Activated CD8-positive, alpha-beta T cell treated with anti-CD3 and anti-CD28 coated beads for 36 hours (primary cell): ENCODE measurements at regions of chr5 and their contacts with region 1.

Region 1: GRCh38 chr5:10635257-10635866 is 71.5 kb downstream of the ANKRD33B start:
- DNase-seq: peak; percentile 94
- ATAC-seq: peak; percentile 82
- H3K4me3 Mint-ChIP-seq: peak overlapping the region; percentile 73
- H3K27ac Mint-ChIP-seq: peak overlapping the region; percentile 100
- H3K4me1 Mint-ChIP-seq: peaks cover 59% of the 10 kb centered on the region
- H3K27me3 Mint-ChIP-seq: no peaks in the 10 kb centered on the region
- CTCF ChIP-seq: no peak

Region 2: DNA sequence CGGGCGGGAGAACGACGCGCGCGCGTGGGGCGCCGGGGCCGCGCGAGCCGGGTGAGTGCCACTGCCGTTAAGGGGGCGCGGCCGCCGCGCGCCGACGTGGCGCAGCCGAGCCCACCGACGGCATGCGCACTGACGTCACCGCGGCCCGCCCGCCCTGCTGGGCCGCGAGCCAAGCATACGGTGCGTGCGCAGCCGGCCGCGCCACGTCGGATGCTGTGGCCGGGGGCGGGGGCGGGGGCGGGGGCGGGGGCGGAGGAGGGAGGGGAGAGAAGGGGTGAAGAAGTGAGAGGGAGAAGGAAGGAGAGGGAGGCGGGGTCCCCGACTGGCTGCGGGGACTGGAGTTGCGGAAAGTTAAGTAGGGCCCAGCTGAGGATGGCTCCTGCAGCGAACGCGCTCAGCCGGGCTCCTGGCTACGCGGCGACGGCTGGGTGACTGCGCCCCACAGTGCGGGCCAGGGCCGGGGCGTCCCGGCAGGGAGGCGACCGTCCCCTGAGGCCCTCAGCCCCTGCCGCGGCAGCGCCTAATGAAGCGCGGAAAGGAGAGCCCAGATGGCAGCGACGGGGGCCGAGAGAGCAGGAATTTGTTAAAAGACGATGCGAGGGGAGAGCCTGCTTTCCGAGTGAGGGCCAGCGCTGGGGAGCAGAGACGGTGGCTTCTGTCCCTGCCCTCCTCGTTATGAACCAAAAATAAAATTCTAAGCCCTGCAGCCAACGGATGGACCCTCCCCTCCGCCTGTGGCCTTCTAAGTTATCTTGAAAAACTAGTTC is 126.0 kb after region 1 on chr5 and contains the start of gene DAP:
- CTCF ChIA-PET with region 1: interaction called, 3 read pairs
- POLR2A ChIA-PET with region 1: interaction called, 3 read pairs
- intact Hi-C with region 1: loop called (anchors 10 kb)
- DNase-seq: peak; percentile 86
- ATAC-seq: peak; percentile 86
- H3K4me3 Mint-ChIP-seq: peak within 1 kb of the TSS; percentile 91
- H3K27ac Mint-ChIP-seq: peak within 1 kb of the TSS; percentile 84
- H3K4me1 Mint-ChIP-seq: peaks cover 44% of the 10 kb centered on the region
- H3K27me3 Mint-ChIP-seq: peaks cover 3% of the 10 kb centered on the region
- CTCF ChIP-seq: no peak
- total RNA-seq, gene DAP: 42.5 to 45.3 TPM